Upper lobe of right lung (tissue), 1 donor: ENCODE measurements at regions of chr3 and their contacts with region 1.

Region 1: GRCh38 chr3:52056968-52057805 is 816 bp upstream of the DUSP7 start:
- DNase-seq: peak; percentile 100
- ATAC-seq: peak; percentile 91
- H3K4me3 ChIP-seq: peak overlapping the region; percentile 56
- H3K27ac ChIP-seq: peak overlapping the region; percentile 83
- H3K4me1 ChIP-seq: peaks cover 28% of the 10 kb centered on the region
- H3K27me3 ChIP-seq: no peaks in the 10 kb centered on the region
- CTCF ChIP-seq: no peak

Region 2: GRCh38 chr3:52144034-52144795 is 87.0 kb after region 1 on chr3:
- intact Hi-C with region 1: loop called (anchors 10 kb)
- DNase-seq: peak; percentile 86
- ATAC-seq: peak; percentile 95
- H3K4me3 ChIP-seq: no peak overlapping the region
- H3K27ac ChIP-seq: no peak overlapping the region
- H3K4me1 ChIP-seq: peaks cover 4% of the 10 kb centered on the region
- H3K27me3 ChIP-seq: no peaks in the 10 kb centered on the region
- CTCF ChIP-seq: peak; percentile 97